Panc1 (cell line): ENCODE measurements at regions of chr2 and their contacts with region 1.

Region 1: DNA sequence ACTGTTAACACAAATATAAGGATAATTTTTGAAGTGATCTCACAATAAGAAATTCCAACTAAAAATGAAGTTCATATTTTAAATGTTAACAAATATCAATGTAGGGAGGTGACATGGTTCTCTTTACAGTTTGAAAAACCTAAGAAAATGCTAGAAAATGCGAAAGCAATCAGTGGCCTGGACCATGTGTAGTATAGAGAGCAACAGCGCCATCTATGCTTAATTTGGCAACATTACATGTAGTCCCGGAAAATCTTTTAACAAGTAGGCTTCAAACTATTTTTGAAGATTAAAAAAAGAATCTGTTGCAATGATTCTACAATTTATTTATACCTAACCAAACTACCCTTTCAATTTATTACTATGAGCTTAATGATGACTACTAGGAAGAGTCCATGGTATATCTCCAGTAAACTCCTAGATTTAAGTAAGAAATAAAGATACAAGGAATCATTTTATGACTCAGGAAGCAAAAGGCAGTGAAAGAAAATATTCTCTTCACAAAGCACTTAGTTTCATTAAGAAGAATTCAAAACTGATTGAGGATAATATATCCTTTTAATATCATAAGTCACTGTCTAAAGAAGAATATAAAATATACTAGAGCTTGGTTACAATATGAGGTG is 33.3 kb downstream of the NDUFA10 start:
- DNase-seq: peak; percentile 12
- ATAC-seq: no peak; the same call in 1 of the 2 replicates
- H3K4me3 ChIP-seq: no peak overlapping the region
- H3K27ac ChIP-seq: no peak overlapping the region
- H3K4me1 ChIP-seq: no peaks in the 10 kb centered on the region
- H3K27me3 ChIP-seq: no peaks in the 10 kb centered on the region
- CTCF ChIP-seq: peak; percentile 82; the same call in 1 of the 2 replicates

Region 2: DNA sequence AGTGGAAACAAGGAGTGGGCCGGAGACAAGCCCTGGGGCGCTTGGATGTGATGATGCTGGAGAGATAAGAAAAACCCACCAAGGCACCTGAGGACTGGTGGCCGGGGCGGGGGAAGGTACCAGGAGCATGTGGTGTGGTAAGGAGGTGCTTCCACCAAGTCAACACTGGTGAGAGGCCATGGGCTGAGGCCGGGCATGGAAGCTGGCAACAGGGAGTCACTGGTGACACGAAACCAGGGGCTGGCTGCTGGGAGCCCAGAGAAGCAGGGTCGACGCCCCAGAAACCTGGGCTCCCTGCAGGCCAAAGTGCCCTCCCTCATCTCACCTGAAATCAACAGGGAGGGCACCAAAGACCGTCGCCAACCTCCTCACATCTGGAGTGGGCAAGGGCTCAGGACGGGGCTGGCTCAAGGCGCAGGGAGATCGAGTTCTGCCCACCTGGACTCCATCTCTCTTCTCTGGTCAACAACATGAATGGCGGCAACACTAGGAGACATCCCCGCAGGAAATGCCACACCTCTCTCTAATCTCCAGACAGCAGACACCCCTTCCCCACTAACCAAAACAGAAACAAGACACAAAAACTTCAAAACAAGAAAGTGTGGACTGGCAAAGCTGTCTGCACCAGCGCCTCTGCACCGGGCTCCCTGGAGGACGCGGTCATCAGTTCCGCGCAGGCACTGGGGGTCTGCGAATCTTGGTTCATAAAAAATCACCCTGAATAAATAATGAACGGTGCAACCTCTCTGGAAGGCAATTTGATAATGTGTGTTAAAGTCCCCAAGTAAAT is 776.5 kb before region 1 on chr2:
- CTCF ChIA-PET with region 1: interaction called, 10 read pairs
- POLR2A ChIA-PET with region 1: no interaction called
- in situ Hi-C with region 1: no loop called
- intact Hi-C with region 1: no loop called
- DNase-seq: no peak
- ATAC-seq: no peak
- H3K4me3 ChIP-seq: no peak overlapping the region
- H3K27ac ChIP-seq: no peak overlapping the region
- H3K4me1 ChIP-seq: no peaks in the 10 kb centered on the region; the same call in 1 of the 2 replicates
- H3K27me3 ChIP-seq: no peaks in the 10 kb centered on the region
- CTCF ChIP-seq: no peak

Region 3: DNA sequence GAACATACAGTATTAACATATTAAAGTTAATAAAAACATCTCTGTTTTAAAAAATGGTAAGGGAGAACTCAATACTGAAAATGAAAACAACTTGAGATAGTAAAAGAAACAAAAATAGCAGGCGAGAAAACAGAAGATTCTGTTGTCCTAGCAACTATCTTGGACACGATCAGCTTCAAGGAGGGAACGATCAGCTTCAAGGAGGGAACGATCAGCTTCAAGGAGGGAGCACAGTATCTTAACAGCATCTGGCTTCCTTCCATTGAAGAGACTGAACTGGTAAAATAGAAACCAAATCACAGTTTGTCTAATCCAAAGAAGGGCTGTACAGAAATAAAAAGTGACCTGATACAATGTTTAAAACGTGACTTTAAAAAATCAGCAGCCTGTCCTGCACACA is 18.4 kb before region 1 on chr2:
- CTCF ChIA-PET with region 1: interaction called, 6 read pairs
- POLR2A ChIA-PET with region 1: no interaction called
- in situ Hi-C with region 1: no loop called
- intact Hi-C with region 1: loop called (anchors 1 kb)
- DNase-seq: no peak
- ATAC-seq: no peak
- H3K4me3 ChIP-seq: no peak overlapping the region
- H3K27ac ChIP-seq: no peak overlapping the region
- H3K4me1 ChIP-seq: no peaks in the 10 kb centered on the region
- H3K27me3 ChIP-seq: no peaks in the 10 kb centered on the region
- CTCF ChIP-seq: no peak

Region 4: GRCh38 chr2:240277073-240277806 is 285.4 kb after region 1 on chr2:
- CTCF ChIA-PET with region 1: no interaction called
- POLR2A ChIA-PET with region 1: no interaction called
- in situ Hi-C with region 1: no loop called
- intact Hi-C with region 1: no loop called
- DNase-seq: no peak
- ATAC-seq: no peak
- H3K4me3 ChIP-seq: no peak overlapping the region
- H3K27ac ChIP-seq: no peak overlapping the region
- H3K4me1 ChIP-seq: no peaks in the 10 kb centered on the region
- H3K27me3 ChIP-seq: peaks cover 22% of the 10 kb centered on the region; the same call in 1 of the 2 replicates
- CTCF ChIP-seq: no peak

Region 5: DNA sequence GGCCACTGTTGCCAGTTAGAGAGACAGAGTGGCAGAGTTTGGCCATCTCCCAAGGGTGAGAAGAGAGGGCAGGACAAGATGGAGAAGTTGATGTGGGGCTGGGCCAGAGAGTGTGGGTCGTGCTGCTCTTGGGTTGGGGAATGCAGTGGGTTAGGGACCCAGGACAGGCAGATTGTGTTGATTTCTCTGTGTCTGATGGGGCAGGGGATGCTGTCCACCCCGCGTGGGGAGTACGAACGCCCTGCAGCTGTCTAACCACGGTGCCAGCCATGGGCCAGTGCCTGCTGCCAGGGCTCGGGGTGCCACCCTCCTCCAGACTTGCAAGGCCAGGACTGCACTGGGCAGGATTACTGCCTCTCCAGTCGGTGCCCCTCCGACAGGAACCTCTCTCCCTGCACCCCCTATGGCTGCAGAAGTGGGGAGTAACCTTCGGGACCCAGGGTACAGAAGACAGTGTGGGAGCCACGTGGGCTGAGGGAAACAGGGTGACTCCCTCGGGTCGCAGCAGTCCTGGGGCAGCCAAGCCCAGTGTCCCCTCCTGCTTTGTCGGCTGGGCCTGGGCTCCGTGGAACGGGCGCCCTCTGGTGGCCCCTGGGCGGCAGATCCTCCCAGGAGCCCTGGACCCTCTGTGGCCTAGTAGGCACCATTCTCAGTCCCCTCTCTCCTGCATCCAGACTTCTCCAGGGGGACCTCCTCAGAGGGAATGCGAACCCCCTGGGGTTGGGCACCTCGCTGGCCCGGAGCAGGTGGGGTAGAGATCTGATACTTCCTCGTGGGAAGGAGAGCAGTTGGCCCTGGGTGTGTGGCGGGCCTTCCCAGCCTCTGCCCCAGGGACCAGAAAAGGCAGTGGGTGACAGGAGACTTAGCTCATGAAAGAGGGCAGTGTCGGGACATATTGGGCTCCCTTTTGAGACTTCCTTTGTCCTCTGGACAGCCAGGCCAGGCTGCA is 446.3 kb after region 1 on chr2:
- CTCF ChIA-PET with region 1: no interaction called
- POLR2A ChIA-PET with region 1: no interaction called
- in situ Hi-C with region 1: no loop called
- intact Hi-C with region 1: no loop called
- DNase-seq: peak; percentile 36
- ATAC-seq: peak; percentile 75
- H3K4me3 ChIP-seq: no peak overlapping the region
- H3K27ac ChIP-seq: no peak overlapping the region; the same call in 1 of the 2 replicates
- H3K4me1 ChIP-seq: peaks cover 12% of the 10 kb centered on the region
- H3K27me3 ChIP-seq: no peaks in the 10 kb centered on the region
- CTCF ChIP-seq: peak; percentile 98